ENCODE measurements at regions of chr21 and their contacts with region 1.

Region 1: GRCh38 chr21:44949779-44950198 is 10.0 kb downstream of the SLX9 start:
- DNase-seq: peak; percentile 90 to 96
- ATAC-seq: peak; percentile 78
- H3K4me3 ChIP-seq: no peak overlapping the region
- H3K27ac ChIP-seq: no peak overlapping the region
- H3K4me1 ChIP-seq: no peaks in the 10 kb centered on the region
- H3K27me3 ChIP-seq: no peaks in the 10 kb centered on the region

Region 2: GRCh38 chr21:44637018-44637850 is 312.6 kb before region 1 on chr21 and contains the start of gene KRTAP10-10:
- intact Hi-C with region 1: no loop called
- DNase-seq: no peak
- ATAC-seq: no peak
- H3K4me3 ChIP-seq: no peak within 1 kb of the TSS
- H3K27ac ChIP-seq: no peak within 1 kb of the TSS
- H3K4me1 ChIP-seq: no peaks in the 10 kb centered on the region
- H3K27me3 ChIP-seq: no peaks in the 10 kb centered on the region
- total RNA-seq, gene KRTAP10-10: not detected

Region 3: DNA sequence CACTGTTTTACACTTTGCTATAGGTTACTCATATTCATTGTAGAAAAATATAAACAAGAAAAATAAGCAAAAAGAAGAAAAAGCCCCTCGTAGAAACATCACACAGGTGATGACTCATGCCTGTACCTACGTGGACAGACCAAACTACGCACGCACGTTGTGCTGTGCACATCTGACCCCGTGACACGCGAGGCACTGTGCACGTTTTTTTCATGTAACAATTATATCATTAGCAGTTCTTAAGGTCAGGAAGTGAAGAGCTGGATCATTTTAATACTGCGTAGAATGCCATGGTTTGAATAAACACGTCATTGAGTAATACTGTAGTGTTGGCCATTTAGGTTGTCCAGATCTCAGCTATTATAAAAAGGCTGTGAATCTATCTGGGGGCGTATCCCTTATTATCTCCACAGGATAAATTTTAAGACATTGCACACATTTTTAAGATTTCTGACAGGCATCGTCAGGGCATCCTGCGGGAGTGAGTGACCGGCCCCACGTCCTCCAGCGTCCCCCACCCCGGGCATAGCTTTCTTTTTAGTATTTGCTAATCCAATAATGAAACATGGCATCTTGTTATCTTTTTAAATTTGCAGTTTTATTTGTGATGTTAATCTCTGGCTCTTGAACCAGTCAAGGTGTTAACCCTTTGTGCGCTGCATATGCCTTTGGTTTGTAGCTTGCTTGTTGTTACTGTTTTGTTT is 101.1 kb after region 1 on chr21:
- intact Hi-C with region 1: loop called in 1 of 2 experiments (anchors 10 kb)
- DNase-seq: peak; percentile 48 to 80
- ATAC-seq: peak; percentile 57
- H3K4me3 ChIP-seq: no peak overlapping the region
- H3K27ac ChIP-seq: peak overlapping the region; percentile 95 to 100
- H3K4me1 ChIP-seq: peaks cover 0 to 3% of the 10 kb centered on the region in 2 donors
- H3K27me3 ChIP-seq: no peaks in the 10 kb centered on the region

Region 4: GRCh38 chr21:45074048-45074817 is 124.4 kb after region 1 on chr21 and contains the start of gene ADARB1:
- intact Hi-C with region 1: loop called in 1 of 2 experiments (anchors 5 kb)
- DNase-seq: peak; percentile 76 to 88
- ATAC-seq: peak; percentile 76
- H3K4me3 ChIP-seq: peak within 1 kb of the TSS; percentile 59 to 88
- H3K27ac ChIP-seq: peak within 1 kb of the TSS; percentile 78 to 95
- H3K4me1 ChIP-seq: peaks cover 0 to 1% of the 10 kb centered on the region in 2 donors
- H3K27me3 ChIP-seq: no peaks in the 10 kb centered on the region
- total RNA-seq, gene ADARB1: 87.9 to 224 TPM

Region 5: GRCh38 chr21:45130324-45130774 is 180.6 kb after region 1 on chr21:
- intact Hi-C with region 1: loop called (anchors 2 kb)
- DNase-seq: no peak
- ATAC-seq: peak; percentile 75
- H3K4me3 ChIP-seq: no peak overlapping the region
- H3K27ac ChIP-seq: peak overlapping the region; percentile 23 to 86
- H3K4me1 ChIP-seq: no peaks in the 10 kb centered on the region
- H3K27me3 ChIP-seq: no peaks in the 10 kb centered on the region

Region 6: DNA sequence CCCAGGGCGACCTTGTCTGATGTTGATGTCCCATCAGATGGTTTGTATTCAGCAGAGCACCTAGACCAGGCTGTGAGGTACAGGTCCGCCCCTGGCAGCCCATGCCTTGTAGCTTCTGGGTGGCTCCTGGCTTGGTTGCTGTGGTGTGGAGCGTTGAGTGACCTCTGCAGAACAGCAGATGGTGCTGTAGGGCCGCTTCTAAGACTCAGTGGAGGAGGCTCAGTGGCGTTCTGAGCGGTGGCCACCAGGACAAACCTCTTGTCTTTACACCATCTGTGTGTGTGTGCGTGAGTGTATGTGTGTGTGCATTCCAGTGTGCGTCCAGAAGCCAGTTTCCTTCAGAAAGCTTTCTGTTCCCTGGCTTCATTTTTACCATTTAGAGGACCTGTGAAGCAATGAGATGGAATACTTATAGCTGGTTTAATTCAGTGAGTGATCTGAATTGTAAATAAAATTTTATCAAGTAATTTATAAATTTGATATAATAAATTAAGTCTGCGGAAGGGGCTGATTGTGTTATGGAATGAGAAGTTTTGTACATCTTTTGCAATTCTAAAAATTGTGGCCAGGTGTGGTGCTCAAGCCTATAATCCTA is 190.7 kb after region 1 on chr21:
- intact Hi-C with region 1: loop called in 1 of 2 experiments (anchors 2 kb)
- DNase-seq: peak; percentile 88
- ATAC-seq: peak; percentile 83
- H3K4me3 ChIP-seq: no peak overlapping the region
- H3K27ac ChIP-seq: no peak overlapping the region
- H3K4me1 ChIP-seq: peaks cover 0 to 2% of the 10 kb centered on the region in 2 donors
- H3K27me3 ChIP-seq: no peaks in the 10 kb centered on the region

Measured in aorta (tissue), 5 donors.